ENCODE measurements at regions of chr20 and their contacts with region 1.

Region 1: DNA sequence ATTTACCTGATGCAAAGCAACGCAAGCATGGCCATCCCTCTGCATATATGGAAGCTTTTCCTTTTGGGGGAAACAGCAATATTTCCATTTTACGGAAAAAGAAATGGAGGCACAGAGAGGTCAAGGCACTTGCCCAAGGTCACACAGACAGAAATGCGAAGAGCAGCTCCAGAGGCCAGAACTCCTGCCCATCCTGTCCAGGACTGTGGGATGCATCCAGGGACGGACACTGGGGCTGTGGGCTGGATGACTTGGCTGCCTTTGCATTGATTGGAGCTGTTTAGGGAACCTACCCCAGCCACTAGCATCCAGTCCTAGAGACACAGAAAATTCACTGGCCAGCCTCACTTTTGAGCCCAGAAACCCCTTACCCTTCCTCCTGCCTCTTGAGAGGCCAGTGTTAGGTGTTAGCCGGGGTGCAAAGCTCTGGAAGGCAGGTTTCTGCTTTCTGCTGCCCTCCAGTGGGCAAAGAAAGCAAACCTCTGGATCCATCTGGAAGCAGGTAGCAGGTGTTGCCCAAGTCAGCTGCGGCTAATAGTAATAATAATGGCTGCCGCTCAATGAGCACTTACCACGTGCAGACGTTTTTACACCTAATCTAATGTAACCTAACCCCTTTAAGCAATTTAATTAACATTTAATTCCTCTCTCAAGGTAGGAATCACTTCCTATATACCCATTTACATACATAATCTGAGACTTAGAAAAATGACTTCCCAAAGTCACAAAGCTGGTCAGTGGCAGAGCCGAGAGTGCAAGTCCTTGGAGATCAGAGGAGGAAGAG is 31.7 kb upstream of the CCN5 start:
- DNase-seq: peak; percentile 75
- H3K4me3 ChIP-seq: no peak overlapping the region; a peak in 1 of 4 replicates
- H3K27ac ChIP-seq: no peak overlapping the region
- H3K4me1 ChIP-seq: peaks cover 0 to 10% of the 10 kb centered on the region in 2 experiments; a peak in 1 of 4 replicates
- H3K27me3 ChIP-seq: no peaks in the 10 kb centered on the region
- CTCF ChIP-seq: peak; percentile 77
- EP300 ChIP-seq: no peak
- RAD21 ChIP-seq: peak; percentile 70

Region 2: GRCh38 chr20:44650771-44651433 is 32.6 kb before region 1 on chr20:
- CTCF ChIA-PET with region 1: interaction called, 11 read pairs
- POLR2A ChIA-PET with region 1: interaction called, 4 read pairs
- DNase-seq: no peak
- H3K4me3 ChIP-seq: peak overlapping the region; percentile 66 to 96
- H3K27ac ChIP-seq: 0 out of 4 replicates have a peak overlapping the region, but pooled peaks of 1 of the 2 experiments have one; percentile 38
- H3K4me1 ChIP-seq: peaks cover 7 to 16% of the 10 kb centered on the region in 2 experiments; a peak in 2 of 4 replicates
- H3K27me3 ChIP-seq: no peaks in the 10 kb centered on the region; the same call in 1 of the 2 replicates
- CTCF ChIP-seq: no peak
- EP300 ChIP-seq: no peak
- RAD21 ChIP-seq: no peak

Region 3: GRCh38 chr20:44714696-44715482 is 31.4 kb after region 1 on chr20 and contains the start of gene CCN5:
- CTCF ChIA-PET with region 1: interaction called, 79 read pairs
- POLR2A ChIA-PET with region 1: interaction called, 3 read pairs
- DNase-seq: peak; percentile 67
- H3K4me3 ChIP-seq: no peak within 1 kb of the TSS
- H3K27ac ChIP-seq: no peak within 1 kb of the TSS
- H3K4me1 ChIP-seq: peaks cover 2 to 4% of the 10 kb centered on the region in 2 experiments; a peak in 3 of 4 replicates
- H3K27me3 ChIP-seq: no peaks in the 10 kb centered on the region
- CTCF ChIP-seq: no peak
- EP300 ChIP-seq: peak in 1 of 2 experiments; percentile 27; a peak in 1 of 4 replicates
- RAD21 ChIP-seq: no peak
- polyA plus RNA-seq, gene CCN5: 0.05 TPM in 2 replicates

Region 4: GRCh38 chr20:44738813-44739477 is 55.5 kb after region 1 on chr20:
- CTCF ChIA-PET with region 1: interaction called, 183 read pairs
- POLR2A ChIA-PET with region 1: no interaction called
- DNase-seq: peak; percentile 88
- H3K4me3 ChIP-seq: peak overlapping the region in 1 of 2 experiments; percentile 40; a peak in 2 of 4 replicates
- H3K27ac ChIP-seq: peak overlapping the region in 1 of 2 experiments; percentile 62; a peak in 2 of 4 replicates
- H3K4me1 ChIP-seq: peaks cover 0 to 29% of the 10 kb centered on the region in 2 experiments; a peak in 2 of 4 replicates
- H3K27me3 ChIP-seq: peaks cover 8% of the 10 kb centered on the region; the same call in 1 of the 2 replicates
- CTCF ChIP-seq: no peak
- EP300 ChIP-seq: no peak
- RAD21 ChIP-seq: no peak

Region 5: GRCh38 chr20:44861531-44862006 is 178.1 kb after region 1 on chr20:
- CTCF ChIA-PET with region 1: interaction called, 21 read pairs
- POLR2A ChIA-PET with region 1: no interaction called
- DNase-seq: no peak
- H3K4me3 ChIP-seq: no peak overlapping the region
- H3K27ac ChIP-seq: 0 out of 4 replicates have a peak overlapping the region, but pooled peaks of 1 of the 2 experiments have one; percentile 12
- H3K4me1 ChIP-seq: peaks cover 0 to 10% of the 10 kb centered on the region in 2 experiments; a peak in 1 of 4 replicates
- H3K27me3 ChIP-seq: no peaks in the 10 kb centered on the region
- CTCF ChIP-seq: no peak
- EP300 ChIP-seq: no peak
- RAD21 ChIP-seq: no peak